Natural killer cell (primary cell): ENCODE measurements at regions of chr10 and their contacts with region 1.

Region 1: DNA sequence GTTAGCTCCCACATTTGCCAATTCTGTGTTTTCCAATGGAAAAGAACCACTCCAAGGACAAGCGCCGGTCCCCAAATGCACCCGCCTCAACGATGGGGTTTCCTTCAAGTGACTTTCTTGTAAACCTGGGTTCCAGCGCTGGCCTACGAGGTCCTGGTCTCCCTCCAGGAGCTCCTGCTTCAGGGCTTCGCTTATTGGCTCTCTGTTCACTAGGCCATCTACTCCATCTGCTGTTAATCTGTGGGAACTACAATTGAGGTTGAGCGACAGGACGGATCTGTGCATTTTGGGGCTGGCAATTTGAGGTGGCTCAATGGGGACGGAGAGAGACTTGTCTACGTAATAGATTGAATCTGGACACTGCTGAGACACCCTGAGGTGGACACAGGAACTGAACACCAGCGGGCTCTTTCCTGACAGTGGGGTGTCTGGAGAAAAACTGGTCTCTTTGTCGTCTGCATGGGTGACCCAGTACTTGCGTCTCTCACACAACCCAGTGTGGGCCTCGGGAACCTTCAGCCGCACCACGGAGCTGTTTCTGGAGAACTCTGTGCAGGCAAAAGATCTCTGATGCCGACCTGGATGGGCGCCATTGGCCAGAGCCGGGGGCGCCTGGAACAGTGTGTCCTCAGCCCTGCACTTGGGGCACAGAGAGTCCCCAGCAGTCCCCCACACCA is 115.9 kb upstream of the ADAM12 start:
- DNase-seq: peak in 1 of 2 donors; percentile 45
- ATAC-seq: peak in 1 of 3 donors; percentile 58
- H3K4me3 ChIP-seq: no peak overlapping the region
- H3K4me3 Mint-ChIP-seq: no peak overlapping the region
- H3K27ac ChIP-seq: no peak overlapping the region
- H3K27ac Mint-ChIP-seq: no peak overlapping the region
- H3K4me1 ChIP-seq: no peaks in the 10 kb centered on the region
- H3K4me1 Mint-ChIP-seq: peaks cover 0 to 5% of the 10 kb centered on the region in 2 donors
- H3K27me3 ChIP-seq: no peaks in the 10 kb centered on the region
- H3K27me3 Mint-ChIP-seq: peaks cover 4 to 6% of the 10 kb centered on the region in 2 donors
- CTCF ChIP-seq: peak; percentile 50

Region 2: GRCh38 chr10:125868372-125868975 is 635.7 kb before region 1 on chr10:
- intact Hi-C with region 1: loop called (anchors 2 kb)
- DNase-seq: peak in 1 of 2 donors; percentile 55
- ATAC-seq: peak in 1 of 3 donors; percentile 67
- H3K4me3 ChIP-seq: no peak overlapping the region
- H3K4me3 Mint-ChIP-seq: no peak overlapping the region
- H3K27ac ChIP-seq: no peak overlapping the region
- H3K27ac Mint-ChIP-seq: no peak overlapping the region
- H3K4me1 ChIP-seq: no peaks in the 10 kb centered on the region
- H3K4me1 Mint-ChIP-seq: no peaks in the 10 kb centered on the region
- H3K27me3 ChIP-seq: no peaks in the 10 kb centered on the region
- H3K27me3 Mint-ChIP-seq: no peaks in the 10 kb centered on the region
- CTCF ChIP-seq: peak; percentile 76

Region 3: DNA sequence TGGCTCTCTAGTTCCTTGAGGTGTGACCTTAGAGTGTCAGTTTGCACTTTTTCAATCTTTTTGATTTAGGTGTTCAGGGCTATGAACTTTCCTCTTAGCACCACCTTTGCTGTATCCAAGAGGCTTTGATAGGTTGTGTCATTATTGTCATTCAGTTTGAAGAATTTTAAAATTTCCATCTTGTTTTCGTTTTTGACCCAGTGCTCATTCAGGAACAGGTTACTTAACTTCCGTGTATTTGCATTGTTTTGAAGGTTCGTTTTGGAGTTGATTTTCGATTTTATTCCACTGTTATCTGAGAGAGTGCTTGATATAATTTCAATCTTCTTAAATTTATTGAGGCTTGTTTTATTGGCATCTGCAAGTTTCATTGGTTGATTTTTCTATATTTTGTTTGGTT is 570.5 kb before region 1 on chr10:
- intact Hi-C with region 1: loop called (anchors 1 kb)
- DNase-seq: no peak
- ATAC-seq: no peak
- H3K4me3 ChIP-seq: no peak overlapping the region
- H3K4me3 Mint-ChIP-seq: no peak overlapping the region
- H3K27ac ChIP-seq: no peak overlapping the region
- H3K27ac Mint-ChIP-seq: no peak overlapping the region
- H3K4me1 ChIP-seq: no peaks in the 10 kb centered on the region
- H3K4me1 Mint-ChIP-seq: no peaks in the 10 kb centered on the region
- H3K27me3 ChIP-seq: no peaks in the 10 kb centered on the region
- H3K27me3 Mint-ChIP-seq: peaks cover 27 to 49% of the 10 kb centered on the region in 2 donors
- CTCF ChIP-seq: no peak

Region 4: GRCh38 chr10:126935263-126935946 is 431.2 kb after region 1 on chr10:
- intact Hi-C with region 1: no loop called
- DNase-seq: no peak
- ATAC-seq: no peak
- H3K4me3 ChIP-seq: no peak overlapping the region
- H3K4me3 Mint-ChIP-seq: no peak overlapping the region
- H3K27ac ChIP-seq: no peak overlapping the region
- H3K27ac Mint-ChIP-seq: no peak overlapping the region
- H3K4me1 ChIP-seq: no peaks in the 10 kb centered on the region
- H3K4me1 Mint-ChIP-seq: no peaks in the 10 kb centered on the region
- H3K27me3 ChIP-seq: no peaks in the 10 kb centered on the region
- H3K27me3 Mint-ChIP-seq: no peaks in the 10 kb centered on the region
- CTCF ChIP-seq: no peak